ENCODE measurements at regions of chr1 and their contacts with region 1.

Region 1: DNA sequence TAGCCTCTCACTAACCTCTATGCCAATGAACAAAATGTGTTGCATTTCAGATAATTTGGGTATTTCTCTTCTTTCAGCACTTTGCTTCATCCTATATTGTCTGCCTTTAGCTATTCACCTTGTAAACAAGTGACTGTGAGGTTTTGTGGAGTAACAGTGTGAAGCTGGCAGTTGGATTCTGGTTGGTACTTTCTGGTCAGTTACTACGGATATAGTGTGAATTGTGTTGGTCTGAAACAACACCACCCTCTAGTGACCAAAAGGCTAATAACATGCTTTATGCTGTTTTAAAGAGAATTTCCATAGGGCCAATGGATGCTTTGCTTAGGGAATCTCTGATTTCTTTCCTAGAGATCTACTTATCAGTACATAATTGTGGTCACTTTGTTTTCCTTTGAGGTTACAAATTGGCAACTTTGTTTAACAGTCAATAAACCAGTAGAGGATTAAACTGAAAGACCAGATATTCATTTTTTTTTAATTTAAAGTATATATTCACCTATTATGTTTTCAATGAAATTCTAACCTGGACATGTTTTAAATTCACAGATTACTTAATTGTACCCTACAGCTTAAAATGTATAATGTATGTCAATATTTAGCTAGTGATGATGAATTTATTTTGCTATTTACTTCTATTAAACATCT is 2.5 kb upstream of the PTGER3 start:
- H3K4me3 Mint-ChIP-seq: no peak overlapping the region
- H3K27ac Mint-ChIP-seq: no peak overlapping the region
- H3K4me1 Mint-ChIP-seq: peaks cover 22% of the 10 kb centered on the region
- H3K27me3 Mint-ChIP-seq: peaks cover 45% of the 10 kb centered on the region

Region 2: DNA sequence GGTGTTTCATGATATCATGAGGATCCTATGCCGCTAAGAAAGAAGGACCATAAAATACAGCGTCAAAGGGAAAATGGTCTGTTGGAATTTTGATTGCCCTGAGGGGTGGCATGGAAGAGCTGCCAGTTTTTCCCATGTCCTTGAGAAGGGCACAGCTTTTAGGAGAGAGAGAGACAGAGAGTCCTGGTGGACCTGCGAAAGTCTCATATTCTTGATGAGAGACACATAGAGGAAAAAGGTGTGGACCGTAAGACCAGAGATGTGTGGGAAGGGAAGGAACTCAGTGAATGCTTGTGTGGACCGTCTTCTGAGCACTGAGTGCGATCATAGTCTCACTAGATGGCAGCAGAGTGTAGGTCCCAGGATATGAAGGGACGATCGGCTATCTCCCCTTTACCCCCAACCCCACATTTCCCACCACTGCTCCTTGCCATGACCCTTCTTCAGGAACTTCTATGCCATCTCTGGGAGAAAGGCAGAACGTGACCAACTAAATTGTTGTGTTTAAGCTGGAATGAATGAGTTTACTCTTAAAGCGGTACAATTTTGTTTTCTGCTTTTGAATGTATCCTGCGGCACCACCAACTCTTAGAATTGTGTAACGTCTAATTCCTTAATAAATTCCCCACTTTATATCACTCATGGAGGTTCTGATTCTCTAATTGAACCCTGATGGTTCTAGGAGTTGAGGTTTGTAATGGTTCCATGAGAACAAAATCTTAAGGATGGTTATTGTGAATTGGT is 521.3 kb before region 1 on chr1:
- intact Hi-C with region 1: loop called (anchors 2 kb)
- H3K4me3 Mint-ChIP-seq: no peak overlapping the region
- H3K27ac Mint-ChIP-seq: no peak overlapping the region
- H3K4me1 Mint-ChIP-seq: no peaks in the 10 kb centered on the region
- H3K27me3 Mint-ChIP-seq: peaks cover 3% of the 10 kb centered on the region

Region 3: DNA sequence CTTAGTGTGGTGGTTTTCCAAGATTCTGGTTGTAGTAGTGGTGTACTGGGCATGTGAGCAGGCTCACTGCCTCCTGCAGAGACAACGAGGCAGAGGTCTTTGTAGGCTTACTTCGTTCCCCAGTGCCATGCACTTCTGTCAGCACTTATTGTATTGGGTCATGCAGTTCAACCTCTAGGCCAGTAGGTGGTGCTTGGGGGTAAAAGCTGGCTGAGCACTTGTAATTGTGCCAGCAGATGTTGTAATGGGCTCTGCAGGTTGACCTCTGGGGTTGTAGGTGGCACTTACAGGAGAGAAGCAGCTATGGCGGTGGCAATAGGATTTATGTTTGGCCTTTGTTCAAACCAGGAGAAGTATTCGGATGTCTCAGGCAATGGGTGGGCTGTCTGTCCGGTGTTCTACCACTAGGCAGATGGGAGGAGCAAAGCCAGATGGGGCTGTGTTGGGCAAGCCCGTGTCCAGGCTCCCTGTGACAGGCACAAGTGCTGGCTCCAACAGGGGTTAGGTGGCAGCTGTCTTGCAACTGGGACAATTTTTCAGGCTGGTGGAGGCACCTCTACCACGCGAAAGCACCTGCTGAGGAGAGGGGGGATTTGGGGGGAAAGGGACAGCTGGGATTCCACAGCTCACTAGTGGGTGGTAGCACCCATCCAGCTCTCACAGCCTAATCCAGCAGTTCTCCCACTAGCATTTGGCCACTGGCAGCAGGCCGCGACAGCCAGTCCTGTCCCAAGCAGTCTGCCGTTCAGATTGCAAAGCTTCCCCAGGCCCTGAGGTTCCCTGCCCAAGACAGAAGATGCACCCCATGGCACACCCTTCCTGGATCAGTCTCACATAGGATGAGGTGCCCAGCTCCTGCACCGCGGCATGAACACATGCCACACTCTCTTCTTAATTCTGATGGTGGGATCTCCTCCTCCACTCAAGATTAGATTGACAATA is 364.5 kb before region 1 on chr1:
- intact Hi-C with region 1: loop called (anchors 1 kb)
- H3K4me3 Mint-ChIP-seq: no peak overlapping the region
- H3K27ac Mint-ChIP-seq: no peak overlapping the region
- H3K4me1 Mint-ChIP-seq: no peaks in the 10 kb centered on the region
- H3K27me3 Mint-ChIP-seq: peaks cover 4% of the 10 kb centered on the region

Region 4: DNA sequence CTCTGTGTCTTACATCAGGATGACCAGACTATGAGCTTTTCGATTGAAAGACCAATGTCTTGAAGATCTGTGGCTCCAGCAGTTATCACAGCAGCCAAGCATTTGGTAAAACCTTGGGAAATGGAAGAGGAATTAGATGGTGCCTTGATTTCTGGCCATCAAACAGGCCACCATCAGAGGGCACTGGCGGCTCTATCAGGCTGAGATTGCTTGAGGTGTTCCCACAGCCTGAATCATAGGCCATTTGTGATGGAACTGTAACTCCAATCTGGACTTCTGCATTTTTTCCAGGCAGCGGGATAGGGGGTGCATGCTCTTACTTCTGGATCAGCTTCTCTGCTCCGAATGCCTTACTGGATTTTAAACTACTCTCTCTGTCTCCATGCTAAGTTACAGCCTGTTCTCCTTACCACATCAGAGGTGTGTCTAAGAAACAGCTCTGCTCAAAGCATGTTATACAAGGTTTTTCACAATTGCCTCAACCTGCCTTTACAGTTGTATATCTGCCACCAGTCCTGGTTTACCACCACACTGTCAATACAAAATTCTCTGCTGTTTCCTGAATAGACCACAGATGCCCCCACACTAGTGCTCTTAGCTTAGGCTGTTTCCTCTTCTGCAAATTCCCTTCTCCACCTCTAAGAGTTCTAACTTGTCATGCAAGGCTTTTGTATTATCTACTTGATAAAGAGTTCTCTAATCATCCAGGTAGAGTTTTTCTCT is 183.4 kb before region 1 on chr1:
- intact Hi-C with region 1: loop called (anchors 2 kb)
- H3K4me3 Mint-ChIP-seq: no peak overlapping the region
- H3K27ac Mint-ChIP-seq: no peak overlapping the region
- H3K4me1 Mint-ChIP-seq: peaks cover 51% of the 10 kb centered on the region
- H3K27me3 Mint-ChIP-seq: peaks cover 9% of the 10 kb centered on the region

Region 5: GRCh38 chr1:70896224-70896623 is 153.9 kb before region 1 on chr1:
- intact Hi-C with region 1: loop called (anchors 10 kb)
- H3K4me3 Mint-ChIP-seq: no peak overlapping the region
- H3K27ac Mint-ChIP-seq: no peak overlapping the region
- H3K4me1 Mint-ChIP-seq: peaks cover 35% of the 10 kb centered on the region
- H3K27me3 Mint-ChIP-seq: no peaks in the 10 kb centered on the region

Region 6: GRCh38 chr1:70978623-70979022 is 71.5 kb before region 1 on chr1:
- intact Hi-C with region 1: loop called (anchors 2 kb)
- H3K4me3 Mint-ChIP-seq: no peak overlapping the region
- H3K27ac Mint-ChIP-seq: peak overlapping the region; percentile 92
- H3K4me1 Mint-ChIP-seq: peaks cover 67% of the 10 kb centered on the region
- H3K27me3 Mint-ChIP-seq: no peaks in the 10 kb centered on the region

Region 7: GRCh38 chr1:71269818-71270217 is 219.7 kb after region 1 on chr1:
- intact Hi-C with region 1: no loop called
- H3K4me3 Mint-ChIP-seq: no peak overlapping the region
- H3K27ac Mint-ChIP-seq: no peak overlapping the region
- H3K4me1 Mint-ChIP-seq: peaks cover 14% of the 10 kb centered on the region
- H3K27me3 Mint-ChIP-seq: no peaks in the 10 kb centered on the region